Dorsolateral prefrontal cortex (tissue), 120 donors: ENCODE measurements at regions of chr3 and their contacts with region 1.

Region 1: DNA sequence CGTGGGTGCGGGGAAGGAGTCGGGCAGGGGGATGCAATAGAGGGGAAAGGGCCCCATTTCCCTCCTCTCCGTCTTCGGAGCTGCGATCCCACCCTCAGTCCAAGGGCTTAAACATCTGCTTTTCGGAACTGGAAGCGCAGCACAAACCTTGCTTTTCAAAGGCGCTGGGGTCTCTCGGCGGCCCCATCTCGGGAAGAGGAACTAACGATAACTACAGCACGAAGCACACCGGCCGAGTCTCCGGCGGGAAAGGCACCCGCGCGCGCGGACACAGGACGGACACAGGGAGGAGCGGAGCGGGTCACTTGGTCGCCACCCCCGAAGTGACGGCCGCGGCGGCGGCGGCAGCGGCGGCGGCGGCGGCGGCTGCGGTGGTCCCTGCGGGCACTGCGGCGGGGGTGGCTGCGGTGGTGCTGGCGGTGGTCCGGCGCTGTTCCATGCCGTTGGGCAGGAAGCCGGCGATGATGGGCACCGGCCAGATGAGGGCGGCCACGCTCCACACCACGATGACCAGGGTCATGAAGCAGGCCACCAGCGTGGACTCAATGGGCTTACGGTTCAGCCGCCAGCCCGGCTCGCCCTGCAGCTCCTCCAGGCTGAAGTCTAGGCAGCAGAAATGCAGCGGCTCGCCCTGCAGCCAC is 1.1 kb downstream of the TMEM158 start:
- DNase-seq: peak; percentile 71 to 83 (median 78)
- H3K4me3 ChIP-seq: peak overlapping the region; percentile 34 to 75 (median 60)
- H3K27ac ChIP-seq: peak overlapping the region in 9 of 59 donors; percentile 11 to 48 (median 33)
- H3K27me3 ChIP-seq: peaks cover 0 to 31% (median 0%) of the 10 kb centered on the region in 45 donors
- CTCF ChIP-seq: peak in 53 of 56 donors; percentile 22 to 79 (median 60)

Region 2: GRCh38 chr3:45043728-45044299 is 181.1 kb before region 1 on chr3:
- intact Hi-C with region 1: loop called in 1 of 2 experiments (anchors 5 kb)
- DNase-seq: no peak
- H3K4me3 ChIP-seq: no peak overlapping the region
- H3K27ac ChIP-seq: no peak overlapping the region
- H3K27me3 ChIP-seq: peaks cover 0 to 5% (median 0%) of the 10 kb centered on the region in 45 donors
- CTCF ChIP-seq: peak in 11 of 56 donors; percentile 10 to 35 (median 17)

Region 3: GRCh38 chr3:45499529-45499928 is 274.6 kb after region 1 on chr3:
- intact Hi-C with region 1: loop called (anchors 2 to 5 kb)
- DNase-seq: no peak
- H3K4me3 ChIP-seq: no peak overlapping the region
- H3K27ac ChIP-seq: no peak overlapping the region
- H3K27me3 ChIP-seq: no peaks in the 10 kb centered on the region
- CTCF ChIP-seq: peak; percentile 25 to 77 (median 62)

Region 4: GRCh38 chr3:45656575-45657363 is 431.8 kb after region 1 on chr3:
- intact Hi-C with region 1: loop called (anchors 2 to 10 kb)
- DNase-seq: peak; percentile 79 to 94 (median 89)
- H3K4me3 ChIP-seq: no peak overlapping the region
- H3K27ac ChIP-seq: no peak overlapping the region
- H3K27me3 ChIP-seq: no peaks in the 10 kb centered on the region
- CTCF ChIP-seq: peak; percentile 89 to 98 (median 95)

Region 5: DNA sequence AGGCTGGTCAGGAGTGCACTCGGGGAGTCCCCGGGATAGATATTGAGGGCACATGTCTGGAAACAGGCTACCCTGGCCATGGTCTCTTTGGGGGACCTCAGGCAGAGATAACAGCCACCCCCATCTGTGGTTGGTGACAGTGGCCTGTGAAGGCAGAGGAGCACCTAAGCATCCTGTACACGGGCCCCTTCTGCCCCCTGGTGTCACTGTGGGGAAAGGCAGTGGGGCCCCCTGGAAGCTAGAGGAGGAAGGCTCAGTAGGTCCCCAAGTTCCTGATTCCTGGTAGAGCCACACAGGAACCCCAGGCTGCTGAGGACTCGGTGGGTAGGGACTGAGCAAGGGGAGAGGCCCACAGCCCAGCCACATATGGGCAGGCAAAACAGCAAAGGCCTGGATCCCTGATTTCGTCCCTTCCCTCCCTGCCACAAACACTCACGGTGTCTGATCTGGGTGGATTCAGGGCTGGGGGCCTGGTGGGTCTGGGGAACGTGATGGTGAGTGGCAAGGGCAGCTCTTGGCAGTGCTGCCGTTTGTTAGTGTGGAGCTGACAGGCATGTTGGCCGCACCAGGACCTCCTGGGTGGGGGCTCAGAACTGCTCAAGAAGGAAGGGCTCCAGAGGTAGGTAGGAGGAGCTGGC is 704.2 kb after region 1 on chr3:
- intact Hi-C with region 1: loop called in 1 of 2 experiments (anchors 10 kb)
- DNase-seq: peak in 7 of 10 donors; percentile 37 to 66 (median 54)
- H3K4me3 ChIP-seq: no peak overlapping the region
- H3K27ac ChIP-seq: no peak overlapping the region
- H3K27me3 ChIP-seq: no peaks in the 10 kb centered on the region
- CTCF ChIP-seq: peak in 55 of 56 donors; percentile 30 to 78 (median 66)